PC-3 (cell line): ENCODE measurements at regions of chr9 and their contacts with region 1.

Region 1: GRCh38 chr9:6566409-6567139 is 79.0 kb downstream of the GLDC start:
- DNase-seq: peak; percentile 97
- ATAC-seq: peak; percentile 82
- H3K4me3 ChIP-seq: peak overlapping the region; percentile 59
- H3K27ac ChIP-seq: peak overlapping the region; percentile 100
- H3K4me1 ChIP-seq: peaks cover 43% of the 10 kb centered on the region
- H3K27me3 ChIP-seq: no peaks in the 10 kb centered on the region
- CTCF ChIP-seq: no peak

Region 2: GRCh38 chr9:6328103-6328502 is 238.5 kb before region 1 on chr9 and contains the start of gene TPD52L3:
- CTCF ChIA-PET with region 1: no interaction called
- POLR2A ChIA-PET with region 1: no interaction called
- intact Hi-C with region 1: loop called (anchors 10 kb)
- DNase-seq: no peak
- ATAC-seq: no peak
- H3K4me3 ChIP-seq: no peak within 1 kb of the TSS
- H3K27ac ChIP-seq: no peak within 1 kb of the TSS
- H3K4me1 ChIP-seq: no peaks in the 10 kb centered on the region
- H3K27me3 ChIP-seq: no peaks in the 10 kb centered on the region
- CTCF ChIP-seq: no peak
- total RNA-seq, gene TPD52L3: not detected in 2 replicates

Region 3: DNA sequence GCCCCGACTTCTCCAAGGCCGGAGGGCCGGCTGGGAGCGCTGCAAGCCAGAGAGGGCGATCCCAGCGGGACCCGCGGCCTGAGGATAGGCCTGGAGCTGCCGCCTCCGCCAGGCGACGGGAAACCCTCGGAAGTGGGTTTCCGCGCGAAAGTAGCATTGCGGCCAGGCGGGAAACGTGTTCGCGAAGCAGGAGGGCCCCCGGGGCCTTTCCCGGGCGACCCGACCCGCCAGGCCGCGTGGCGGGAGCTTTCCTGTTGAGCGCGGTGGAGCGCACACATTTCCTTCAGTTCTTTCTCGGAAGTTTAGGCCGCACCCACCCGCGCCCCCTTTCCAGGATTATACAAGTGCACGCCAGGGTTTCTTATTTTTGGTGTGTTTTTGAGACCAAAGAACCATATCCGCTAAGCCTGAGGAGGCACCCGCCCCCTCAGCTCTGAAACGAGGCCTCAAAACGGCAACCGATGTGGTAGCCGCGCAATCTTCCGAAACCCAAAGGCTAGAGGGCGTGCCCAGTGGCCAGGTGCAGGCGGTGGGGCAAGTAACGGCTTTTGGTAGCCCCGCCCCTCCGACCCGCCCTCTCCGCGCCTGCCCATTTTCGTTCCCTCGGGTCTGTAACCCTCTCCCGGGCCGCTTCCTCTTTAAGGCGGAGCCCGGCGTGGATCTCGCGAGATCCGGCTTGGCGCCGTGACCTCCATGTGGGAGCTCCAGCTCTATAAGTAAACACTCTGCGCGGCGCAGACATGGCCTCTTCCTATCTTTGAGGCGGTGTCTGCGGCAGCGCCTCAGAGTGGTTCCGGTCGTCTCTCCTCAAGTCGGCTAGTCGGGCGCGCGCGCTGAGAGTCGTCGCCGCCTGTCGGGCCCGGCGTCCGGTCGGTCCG is 153.8 kb before region 1 on chr9 and contains the start of gene UHRF2:
- CTCF ChIA-PET with region 1: no interaction called
- POLR2A ChIA-PET with region 1: interaction called, 3 read pairs
- intact Hi-C with region 1: loop called (anchors 5 kb)
- DNase-seq: peak; percentile 97
- ATAC-seq: peak; percentile 91
- H3K4me3 ChIP-seq: peak within 1 kb of the TSS; percentile 100
- H3K27ac ChIP-seq: peak within 1 kb of the TSS; percentile 25; the same call in 1 of the 2 replicates
- H3K4me1 ChIP-seq: peaks cover 15% of the 10 kb centered on the region; the same call in 1 of the 2 replicates
- H3K27me3 ChIP-seq: no peaks in the 10 kb centered on the region
- CTCF ChIP-seq: no peak
- total RNA-seq, gene UHRF2: 30.8 and 31.3 TPM in 2 replicates

Region 4: DNA sequence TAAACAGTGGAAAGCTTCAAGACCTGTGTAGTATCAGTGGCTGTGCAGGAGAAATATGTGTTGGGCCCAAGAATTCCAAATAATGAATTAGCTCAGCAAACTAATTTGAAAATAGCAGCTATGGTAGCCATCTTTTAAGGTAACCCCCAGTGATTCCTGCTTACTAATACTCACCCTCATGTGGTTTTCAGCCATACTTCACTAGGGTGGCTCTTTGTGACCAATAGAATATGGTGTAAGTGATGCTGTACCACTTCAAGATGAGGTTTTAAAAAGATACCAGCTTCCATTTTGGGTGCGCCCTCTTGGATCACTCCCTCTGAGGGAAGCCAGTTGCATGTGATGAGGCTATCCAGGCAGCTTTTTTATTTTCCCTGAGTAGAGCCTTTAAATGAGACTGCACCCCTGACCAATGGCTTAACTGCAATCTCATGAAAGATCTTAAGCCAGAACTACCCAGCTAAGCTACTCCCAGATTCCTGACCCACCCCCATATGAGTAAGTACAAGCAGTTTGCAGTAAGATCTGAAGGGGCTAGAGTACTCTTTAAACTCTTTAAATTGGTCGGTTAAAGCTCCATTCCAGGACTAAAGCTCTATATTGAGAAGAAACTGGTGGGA is 95.2 kb before region 1 on chr9:
- CTCF ChIA-PET with region 1: no interaction called
- POLR2A ChIA-PET with region 1: interaction called, 18 read pairs
- intact Hi-C with region 1: no loop called
- DNase-seq: no peak
- ATAC-seq: no peak
- H3K4me3 ChIP-seq: no peak overlapping the region
- H3K27ac ChIP-seq: no peak overlapping the region
- H3K4me1 ChIP-seq: peaks cover 3% of the 10 kb centered on the region; the same call in 1 of the 2 replicates
- H3K27me3 ChIP-seq: no peaks in the 10 kb centered on the region
- CTCF ChIP-seq: no peak

Region 5: DNA sequence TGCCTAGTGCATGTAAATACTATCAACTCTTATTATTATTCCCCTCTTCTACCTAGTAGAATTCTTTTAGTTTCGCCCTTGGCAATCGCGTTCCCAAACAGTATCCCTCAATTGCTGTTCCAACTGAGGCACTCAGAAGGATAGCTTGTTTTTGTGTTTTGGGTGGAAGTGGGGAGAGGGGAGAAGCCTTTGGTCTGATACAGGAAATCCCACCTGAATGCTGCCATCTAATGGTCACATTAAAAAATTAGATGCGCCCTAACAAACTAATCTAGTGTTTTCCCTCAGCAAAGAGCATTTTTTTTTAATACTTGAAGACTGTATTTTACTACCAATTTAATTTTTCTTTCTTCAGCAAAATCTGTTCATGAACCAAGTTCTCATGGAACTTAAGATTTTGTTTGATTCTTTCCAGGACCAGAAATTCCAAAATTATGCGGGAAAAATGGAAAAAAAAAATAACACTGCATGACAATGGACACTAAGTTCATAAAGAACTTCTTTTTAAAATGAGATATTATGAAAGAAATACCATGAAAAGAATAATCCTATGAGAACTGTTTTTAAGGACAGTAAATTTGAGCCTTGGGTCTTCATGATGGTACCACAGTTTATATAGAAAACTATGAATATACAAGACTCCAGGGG is 101.2 kb after region 1 on chr9:
- CTCF ChIA-PET with region 1: no interaction called
- POLR2A ChIA-PET with region 1: no interaction called
- intact Hi-C with region 1: no loop called
- DNase-seq: peak; percentile 26
- ATAC-seq: peak; percentile 45; the same call in 1 of the 2 replicates
- H3K4me3 ChIP-seq: no peak overlapping the region
- H3K27ac ChIP-seq: no peak overlapping the region
- H3K4me1 ChIP-seq: no peaks in the 10 kb centered on the region
- H3K27me3 ChIP-seq: no peaks in the 10 kb centered on the region
- CTCF ChIP-seq: peak; percentile 70